B cell (primary cell): ENCODE measurements at regions of chr5 and their contacts with region 1.

Region 1: GRCh38 chr5:10695055-10695649 is 65.9 kb downstream of the DAP start:
- DNase-seq: peak; percentile 59
- ATAC-seq: peak; percentile 26
- H3K4me3 ChIP-seq: no peak overlapping the region
- H3K4me3 Mint-ChIP-seq: no peak overlapping the region
- H3K27ac ChIP-seq: no peak overlapping the region
- H3K27ac Mint-ChIP-seq: peak overlapping the region; percentile 21
- H3K4me1 ChIP-seq: peaks cover 7 to 21% of the 10 kb centered on the region in 2 donors
- H3K4me1 Mint-ChIP-seq: peaks cover 23% of the 10 kb centered on the region
- H3K27me3 ChIP-seq: no peaks in the 10 kb centered on the region
- H3K27me3 Mint-ChIP-seq: no peaks in the 10 kb centered on the region
- CTCF ChIP-seq: peak; percentile 71

Region 2: DNA sequence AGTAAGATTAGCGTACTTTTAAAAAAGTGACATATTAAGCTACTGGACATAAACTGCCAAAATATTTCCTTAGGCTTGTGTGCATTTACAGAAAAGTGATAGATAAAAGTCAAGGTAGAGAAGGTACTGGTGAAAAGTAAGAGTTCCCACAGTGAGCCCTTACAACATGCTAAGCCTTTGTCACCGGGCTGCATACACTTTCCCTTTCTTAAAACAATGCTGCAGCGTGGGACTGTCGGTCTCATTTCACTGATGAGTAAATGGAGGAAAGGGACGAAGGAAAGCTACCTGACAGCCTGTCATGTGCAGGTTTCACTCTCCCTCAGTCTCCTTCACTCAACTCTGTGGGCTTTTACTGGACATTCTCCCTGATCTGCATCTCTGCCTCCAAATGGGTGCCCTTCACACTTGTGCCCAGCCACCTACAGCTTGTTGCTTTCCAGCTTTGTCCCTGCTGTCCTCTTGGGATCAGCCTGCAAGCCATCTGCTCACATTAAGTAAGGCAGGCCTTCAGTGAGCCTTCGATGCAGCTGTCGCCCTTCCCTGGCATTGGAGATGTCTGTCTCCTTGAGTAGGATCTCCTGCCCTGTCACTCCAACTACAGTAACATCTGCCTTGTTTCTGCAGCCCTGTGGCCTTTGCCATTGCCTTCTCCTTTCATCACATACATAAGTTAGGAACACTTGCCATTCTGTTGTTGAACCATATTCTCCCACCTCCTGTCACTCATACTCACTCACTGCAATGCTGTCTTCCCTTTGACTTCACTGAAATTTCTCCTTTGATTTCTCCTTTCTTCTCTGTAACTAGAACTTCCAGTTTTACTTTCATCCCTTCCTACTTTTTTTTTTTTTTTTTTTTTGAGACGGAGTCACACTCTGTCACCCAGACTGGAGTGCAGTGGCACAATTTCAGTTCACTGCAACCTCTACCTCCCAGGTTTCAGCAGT is 262.8 kb before region 1 on chr5:
- CTCF ChIA-PET with region 1: no interaction called
- POLR2A ChIA-PET with region 1: no interaction called
- intact Hi-C with region 1: no loop called
- DNase-seq: no peak
- ATAC-seq: no peak
- H3K4me3 ChIP-seq: no peak overlapping the region
- H3K4me3 Mint-ChIP-seq: no peak overlapping the region
- H3K27ac ChIP-seq: no peak overlapping the region
- H3K27ac Mint-ChIP-seq: no peak overlapping the region
- H3K4me1 ChIP-seq: no peaks in the 10 kb centered on the region
- H3K4me1 Mint-ChIP-seq: no peaks in the 10 kb centered on the region
- H3K27me3 ChIP-seq: no peaks in the 10 kb centered on the region
- H3K27me3 Mint-ChIP-seq: no peaks in the 10 kb centered on the region
- CTCF ChIP-seq: no peak

Region 3: DNA sequence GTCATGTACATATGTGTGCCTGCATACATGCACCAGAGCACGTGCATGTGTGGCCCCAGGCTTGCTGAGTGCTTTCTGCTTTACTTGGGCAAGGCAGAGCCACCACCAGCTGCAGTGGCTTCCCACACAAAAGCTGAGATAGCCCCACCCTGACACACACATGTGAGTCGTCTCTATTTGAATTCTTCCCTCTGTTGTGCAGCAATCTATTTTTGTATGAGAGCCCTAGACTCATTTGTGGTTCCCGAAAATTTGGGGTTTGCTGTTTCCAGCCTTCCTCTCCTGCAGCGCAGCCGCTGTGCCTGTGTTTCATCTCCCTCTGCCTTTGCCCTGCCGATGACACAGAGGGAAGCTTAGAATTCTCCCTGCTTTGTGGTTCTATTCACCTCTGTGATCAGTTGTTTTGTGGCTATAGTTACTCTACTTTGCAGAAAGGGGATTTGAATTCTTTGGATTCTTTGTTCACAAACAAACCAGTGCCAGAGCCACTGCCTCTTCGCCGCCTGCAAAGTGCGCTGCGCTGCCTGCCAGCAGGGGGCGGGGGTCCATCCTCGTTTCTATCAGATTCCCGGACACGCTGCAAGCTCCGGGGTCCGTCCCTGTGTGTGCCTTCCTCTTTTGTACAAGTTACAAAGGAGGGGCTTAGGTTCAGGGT is 161.7 kb after region 1 on chr5:
- CTCF ChIA-PET with region 1: no interaction called
- POLR2A ChIA-PET with region 1: no interaction called
- intact Hi-C with region 1: loop called (anchors 10 kb)
- DNase-seq: peak; percentile 39
- ATAC-seq: no peak
- H3K4me3 ChIP-seq: no peak overlapping the region
- H3K4me3 Mint-ChIP-seq: no peak overlapping the region
- H3K27ac ChIP-seq: no peak overlapping the region
- H3K27ac Mint-ChIP-seq: no peak overlapping the region
- H3K4me1 ChIP-seq: no peaks in the 10 kb centered on the region
- H3K4me1 Mint-ChIP-seq: peaks cover 6% of the 10 kb centered on the region
- H3K27me3 ChIP-seq: peaks cover 0 to 6% (median 2%) of the 10 kb centered on the region in 4 experiments
- H3K27me3 Mint-ChIP-seq: peaks cover 24% of the 10 kb centered on the region
- CTCF ChIP-seq: peak; percentile 75

Region 4: GRCh38 chr5:11182441-11183268 is 487.5 kb after region 1 on chr5:
- CTCF ChIA-PET with region 1: no interaction called
- POLR2A ChIA-PET with region 1: no interaction called
- intact Hi-C with region 1: loop called (anchors 2 kb)
- DNase-seq: peak; percentile 17
- ATAC-seq: no peak
- H3K4me3 ChIP-seq: no peak overlapping the region
- H3K4me3 Mint-ChIP-seq: no peak overlapping the region
- H3K27ac ChIP-seq: no peak overlapping the region
- H3K27ac Mint-ChIP-seq: no peak overlapping the region
- H3K4me1 ChIP-seq: no peaks in the 10 kb centered on the region
- H3K4me1 Mint-ChIP-seq: peaks cover 4% of the 10 kb centered on the region
- H3K27me3 ChIP-seq: no peaks in the 10 kb centered on the region
- H3K27me3 Mint-ChIP-seq: no peaks in the 10 kb centered on the region
- CTCF ChIP-seq: no peak

Region 5: GRCh38 chr5:11494340-11494739 is 799.2 kb after region 1 on chr5:
- CTCF ChIA-PET with region 1: no interaction called
- POLR2A ChIA-PET with region 1: no interaction called
- intact Hi-C with region 1: loop called (anchors 5 kb)
- DNase-seq: no peak
- ATAC-seq: no peak
- H3K4me3 ChIP-seq: no peak overlapping the region
- H3K4me3 Mint-ChIP-seq: no peak overlapping the region
- H3K27ac ChIP-seq: no peak overlapping the region
- H3K27ac Mint-ChIP-seq: no peak overlapping the region
- H3K4me1 ChIP-seq: no peaks in the 10 kb centered on the region
- H3K4me1 Mint-ChIP-seq: no peaks in the 10 kb centered on the region
- H3K27me3 ChIP-seq: no peaks in the 10 kb centered on the region
- H3K27me3 Mint-ChIP-seq: peaks cover 3% of the 10 kb centered on the region
- CTCF ChIP-seq: no peak

Region 6: DNA sequence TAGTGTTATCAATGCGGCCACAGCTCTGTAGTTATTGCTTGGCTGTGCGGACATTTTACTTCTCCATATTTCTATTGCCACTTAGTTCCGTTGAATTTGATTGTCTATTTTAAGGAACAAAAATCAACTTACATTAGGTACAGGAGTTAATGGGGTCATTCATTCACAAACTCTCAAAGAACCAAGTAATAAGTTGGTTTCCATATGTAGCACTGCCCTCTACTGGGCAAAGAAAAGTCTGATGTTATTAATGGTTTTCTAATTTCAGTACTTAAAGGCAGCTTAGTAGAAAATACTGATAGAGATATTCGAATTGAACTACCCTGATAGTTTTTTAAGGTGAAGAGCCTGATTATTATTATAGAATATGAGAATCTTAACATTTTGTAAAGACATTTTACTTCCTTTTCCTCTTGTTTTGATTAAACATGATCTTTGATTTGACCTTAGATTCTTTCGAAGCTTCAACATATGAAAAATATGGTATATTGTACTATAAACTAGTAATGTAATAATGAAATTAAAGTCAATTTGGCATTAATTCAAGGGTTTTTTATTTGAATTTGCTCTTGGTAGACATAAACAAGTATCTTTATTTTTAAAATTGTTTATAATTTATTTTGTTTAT is 1328.6 kb after region 1 on chr5:
- CTCF ChIA-PET with region 1: interaction called, 6 read pairs
- POLR2A ChIA-PET with region 1: no interaction called
- intact Hi-C with region 1: loop called (anchors 5 kb)
- DNase-seq: peak; percentile 10
- ATAC-seq: no peak
- H3K4me3 ChIP-seq: no peak overlapping the region
- H3K4me3 Mint-ChIP-seq: no peak overlapping the region
- H3K27ac ChIP-seq: no peak overlapping the region
- H3K27ac Mint-ChIP-seq: no peak overlapping the region
- H3K4me1 ChIP-seq: no peaks in the 10 kb centered on the region
- H3K4me1 Mint-ChIP-seq: no peaks in the 10 kb centered on the region
- H3K27me3 ChIP-seq: no peaks in the 10 kb centered on the region
- H3K27me3 Mint-ChIP-seq: no peaks in the 10 kb centered on the region
- CTCF ChIP-seq: peak; percentile 68